ENCODE measurements at regions of chr1 and their contacts with region 1.

Region 1: DNA sequence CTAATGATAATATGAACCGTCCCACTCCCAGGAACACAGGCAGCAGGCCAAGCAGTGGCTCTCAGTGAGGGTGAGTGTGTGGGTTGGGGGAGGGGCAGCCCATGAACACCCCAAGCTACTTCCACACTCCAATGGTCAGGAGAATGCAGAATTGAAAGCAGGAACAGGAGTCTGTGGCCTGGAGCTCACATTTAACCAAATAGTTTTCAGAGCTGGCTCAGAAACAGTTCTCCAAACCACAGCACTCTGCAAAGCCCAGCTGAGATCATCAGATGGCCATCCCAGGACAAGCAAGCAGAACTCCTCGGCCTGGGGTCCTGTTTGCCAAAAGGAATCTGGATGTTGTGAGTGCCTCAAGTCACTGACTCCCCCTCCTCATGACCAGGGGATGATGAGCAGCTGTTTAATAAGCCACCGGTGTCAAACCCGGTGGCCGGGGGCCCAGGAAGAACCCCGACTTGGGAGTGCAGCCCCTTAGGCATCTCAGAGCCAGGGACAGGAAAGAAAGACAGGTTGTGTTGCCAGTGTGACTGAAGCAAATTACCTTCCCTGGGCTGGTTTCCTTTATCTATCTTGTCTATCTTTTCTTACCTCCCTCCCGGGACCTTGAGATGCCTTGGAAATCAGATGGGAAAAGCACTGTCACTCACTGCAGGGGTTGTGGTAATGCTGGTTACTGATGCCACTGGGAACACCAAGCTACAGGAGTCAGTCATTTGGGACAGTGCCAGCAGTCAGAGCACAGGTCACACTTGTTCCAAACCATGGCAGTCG is 20.4 kb downstream of the DEGS1 start:
- DNase-seq: peak; percentile 82
- ATAC-seq: peak; percentile 85
- H3K4me3 ChIP-seq: peak overlapping the region in 2 of 5 experiments; percentile 16 to 24
- H3K4me3 Mint-ChIP-seq: peak overlapping the region; percentile 76
- H3K27ac ChIP-seq: peak overlapping the region; percentile 24 to 25
- H3K27ac Mint-ChIP-seq: peak overlapping the region; percentile 73
- H3K4me1 ChIP-seq: peaks cover 38 to 40% of the 10 kb centered on the region in 2 donors
- H3K4me1 Mint-ChIP-seq: peaks cover 36% of the 10 kb centered on the region
- H3K27me3 ChIP-seq: no peaks in the 10 kb centered on the region
- H3K27me3 Mint-ChIP-seq: no peaks in the 10 kb centered on the region
- CTCF ChIP-seq: no peak

Region 2: GRCh38 chr1:224168859-224169380 is 34.5 kb before region 1 on chr1:
- CTCF ChIA-PET with region 1: no interaction called
- POLR2A ChIA-PET with region 1: no interaction called
- intact Hi-C with region 1: loop called (anchors 5 kb)
- DNase-seq: peak; percentile 85
- ATAC-seq: peak; percentile 86
- H3K4me3 ChIP-seq: peak overlapping the region in 1 of 5 experiments; percentile 40
- H3K4me3 Mint-ChIP-seq: peak overlapping the region; percentile 53
- H3K27ac ChIP-seq: peak overlapping the region; percentile 35 to 43
- H3K27ac Mint-ChIP-seq: peak overlapping the region; percentile 48
- H3K4me1 ChIP-seq: peaks cover 26 to 30% of the 10 kb centered on the region in 2 donors
- H3K4me1 Mint-ChIP-seq: peaks cover 27% of the 10 kb centered on the region
- H3K27me3 ChIP-seq: no peaks in the 10 kb centered on the region
- H3K27me3 Mint-ChIP-seq: no peaks in the 10 kb centered on the region
- CTCF ChIP-seq: no peak